ENCODE measurements at regions of chr7 and their contacts with region 1.

Region 1: DNA sequence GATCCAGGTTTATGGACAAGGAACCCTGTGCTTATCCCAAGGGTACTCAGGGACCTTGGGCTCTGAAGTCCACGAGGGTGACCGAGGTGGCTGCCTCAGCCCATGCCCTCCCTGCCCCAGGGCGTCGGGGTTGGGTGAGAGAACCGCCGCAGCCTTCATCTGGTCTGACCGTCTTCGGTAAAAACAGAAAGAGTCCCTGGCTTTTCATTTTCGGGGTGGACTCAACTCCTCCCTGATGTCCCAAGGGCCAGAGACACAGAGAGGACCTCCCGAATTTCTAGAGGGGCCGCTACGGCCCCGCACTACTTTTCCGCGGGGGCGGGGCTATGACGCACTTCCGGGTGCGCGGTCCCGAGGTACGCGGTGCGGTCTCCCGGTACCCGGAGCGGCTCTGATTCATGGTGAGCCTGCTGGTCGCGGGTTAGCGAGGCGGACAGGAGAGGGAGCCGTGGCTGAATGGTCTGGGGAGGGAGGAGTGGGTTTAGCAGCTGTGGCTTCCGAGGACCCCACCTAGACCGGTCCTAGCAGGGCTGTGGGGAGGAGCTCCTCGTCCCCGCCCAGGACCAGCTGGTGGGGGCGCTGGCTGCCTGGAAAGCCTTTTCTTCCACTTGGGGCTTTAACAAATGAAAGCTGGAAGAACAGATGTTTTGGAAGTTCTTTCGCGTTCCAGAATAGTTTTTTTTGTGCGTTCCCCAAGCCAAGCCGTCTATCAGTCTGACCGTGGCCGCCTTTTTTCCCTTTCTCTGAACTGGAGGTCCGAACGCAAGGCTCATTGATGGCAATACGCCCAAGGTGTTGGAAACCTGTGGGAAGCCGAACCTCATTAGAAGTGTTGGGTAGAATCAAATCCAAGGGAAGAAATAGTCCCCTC is at the start of gene ZSCAN21:
- DNase-seq: peak; percentile 85 to 93 (median 89)
- ATAC-seq: peak; percentile 94 to 99 (median 98)
- H3K4me3 ChIP-seq: peak within 1 kb of the TSS; percentile 53 to 92 (median 80)
- H3K27ac ChIP-seq: peak within 1 kb of the TSS; percentile 66 to 98 (median 94)
- H3K4me1 ChIP-seq: peaks cover 0 to 19% (median 7%) of the 10 kb centered on the region in 12 donors
- H3K27me3 ChIP-seq: no peaks in the 10 kb centered on the region
- CTCF ChIP-seq: peak in 5 of 12 donors; percentile 14 to 45 (median 16)
- POLR2A ChIP-seq: peak; percentile 21 to 79
- total RNA-seq, gene ZSCAN21: 6.2 to 12.1 (median 7.2) TPM

Region 2: DNA sequence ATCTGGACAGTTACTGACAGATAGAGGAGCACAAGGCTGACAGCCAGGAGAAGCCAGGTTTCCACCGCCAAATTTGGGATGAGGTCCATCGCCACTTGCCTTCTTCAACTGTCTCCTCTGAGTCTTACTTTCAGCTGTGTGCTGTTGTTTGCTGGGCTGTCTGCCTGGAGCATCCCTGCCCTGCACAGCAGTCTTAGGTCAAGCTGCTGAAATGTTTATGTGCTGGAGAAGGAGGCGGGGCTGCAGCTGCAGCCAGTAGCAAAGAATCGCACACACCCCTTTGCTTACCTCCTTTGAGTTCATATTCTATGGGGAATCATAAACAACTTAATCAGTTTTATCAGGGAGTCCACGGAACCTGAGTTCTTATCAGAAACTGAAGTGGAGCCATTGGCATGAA is 349.7 kb before region 1 on chr7:
- intact Hi-C with region 1: no loop called
- DNase-seq: no peak
- ATAC-seq: no peak
- H3K4me3 ChIP-seq: no peak overlapping the region
- H3K27ac ChIP-seq: no peak overlapping the region
- H3K4me1 ChIP-seq: no peaks in the 10 kb centered on the region
- H3K27me3 ChIP-seq: no peaks in the 10 kb centered on the region
- CTCF ChIP-seq: no peak
- POLR2A ChIP-seq: no peak

Region 3: GRCh38 chr7:99975782-99976521 is 73.7 kb before region 1 on chr7 and contains the start of gene AZGP1:
- intact Hi-C with region 1: loop called in 1 of 10 experiments (anchors 5 kb)
- DNase-seq: peak in 4 of 5 donors; percentile 48 to 77 (median 60)
- ATAC-seq: peak; percentile 87 to 93 (median 92)
- H3K4me3 ChIP-seq: peak within 1 kb of the TSS in 10 of 12 donors; percentile 12 to 49 (median 24)
- H3K27ac ChIP-seq: peak within 1 kb of the TSS in 9 of 12 donors; percentile 29 to 79 (median 60)
- H3K4me1 ChIP-seq: peaks cover 0 to 6% (median 0%) of the 10 kb centered on the region in 12 donors
- H3K27me3 ChIP-seq: peaks cover 0 to 4% (median 0%) of the 10 kb centered on the region in 9 donors
- CTCF ChIP-seq: no peak
- POLR2A ChIP-seq: peak in 1 of 2 donors; percentile 38
- total RNA-seq, gene AZGP1: 31.8 to 214 (median 95.4) TPM

Region 4: GRCh38 chr7:99997545-99998137 is 52.0 kb before region 1 on chr7:
- intact Hi-C with region 1: loop called in 9 of 10 experiments (anchors 2 to 10 kb)
- DNase-seq: peak; percentile 42 to 86 (median 65)
- ATAC-seq: peak; percentile 53 to 79 (median 74)
- H3K4me3 ChIP-seq: peak overlapping the region; percentile 35 to 75 (median 60)
- H3K27ac ChIP-seq: peak overlapping the region; percentile 59 to 90 (median 81)
- H3K4me1 ChIP-seq: peaks cover 0 to 21% (median 11%) of the 10 kb centered on the region in 12 donors
- H3K27me3 ChIP-seq: no peaks in the 10 kb centered on the region
- CTCF ChIP-seq: peak in 11 of 12 donors; percentile 16 to 58 (median 31)
- POLR2A ChIP-seq: peak in 1 of 2 donors; percentile 37

Region 5: DNA sequence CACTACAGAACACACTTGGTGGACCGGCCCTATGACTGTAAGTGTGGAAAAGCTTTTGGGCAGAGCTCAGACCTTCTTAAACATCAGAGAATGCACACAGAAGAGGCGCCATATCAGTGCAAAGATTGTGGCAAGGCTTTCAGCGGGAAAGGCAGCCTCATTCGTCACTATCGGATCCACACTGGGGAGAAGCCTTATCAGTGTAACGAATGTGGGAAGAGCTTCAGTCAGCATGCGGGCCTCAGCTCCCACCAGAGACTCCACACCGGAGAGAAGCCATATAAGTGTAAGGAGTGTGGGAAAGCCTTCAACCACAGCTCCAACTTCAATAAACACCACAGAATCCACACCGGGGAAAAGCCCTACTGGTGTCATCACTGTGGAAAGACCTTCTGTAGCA is 14.5 kb after region 1 on chr7:
- intact Hi-C with region 1: loop called in 1 of 10 experiments (anchors 1 kb)
- DNase-seq: no peak
- ATAC-seq: no peak
- H3K4me3 ChIP-seq: no peak overlapping the region
- H3K27ac ChIP-seq: peak overlapping the region in 1 of 12 donors; percentile 75
- H3K4me1 ChIP-seq: peaks cover 0 to 17% (median 9%) of the 10 kb centered on the region in 12 donors
- H3K27me3 ChIP-seq: no peaks in the 10 kb centered on the region
- CTCF ChIP-seq: no peak
- POLR2A ChIP-seq: no peak

Region 6: DNA sequence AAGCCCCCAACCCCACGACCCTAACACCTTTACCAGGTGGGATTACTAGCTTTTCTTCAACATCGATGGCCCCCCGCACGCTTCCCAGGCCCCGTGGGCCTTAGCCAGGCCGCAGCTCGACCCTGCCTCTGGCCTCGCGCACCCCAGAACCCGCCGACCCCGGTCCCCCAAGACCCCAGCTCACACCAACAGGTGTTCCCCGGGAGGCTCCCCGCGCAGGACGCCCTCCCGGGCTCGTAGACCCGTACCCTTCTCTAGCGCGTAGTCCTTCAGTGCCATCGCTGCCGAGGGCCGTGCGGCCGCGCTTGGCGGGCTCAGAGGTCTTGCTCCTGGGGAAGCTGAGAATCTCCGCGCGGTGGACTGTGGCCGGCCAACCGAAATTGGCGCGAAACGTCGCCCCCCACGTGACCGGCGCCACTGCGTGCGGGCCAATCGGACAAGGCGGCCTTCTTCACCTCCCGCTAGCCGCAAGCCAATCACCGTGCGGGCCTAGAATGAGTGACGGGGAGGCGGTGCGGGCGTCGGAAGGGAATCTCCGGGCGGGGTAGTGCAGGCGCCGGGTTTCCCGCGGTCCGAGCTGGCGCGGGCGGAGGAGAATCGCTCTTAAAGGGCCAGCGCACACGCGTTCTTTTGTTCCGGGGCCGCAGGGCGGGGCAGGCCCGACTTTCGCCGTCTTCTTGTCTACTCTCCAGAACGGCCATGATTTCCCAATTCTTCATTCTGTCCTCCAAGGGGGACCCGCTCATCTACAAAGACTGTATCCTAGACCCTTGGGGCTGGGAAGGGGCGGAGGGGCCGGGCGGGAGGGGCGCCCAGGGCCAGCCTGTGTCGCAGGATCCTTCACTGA is 51.6 kb after region 1 on chr7 and contains the starts of genes AP4M1 and MCM7:
- intact Hi-C with region 1: loop called in 2 of 10 experiments (anchors 2 kb)
- DNase-seq: peak; percentile 99
- ATAC-seq: peak; percentile 94 to 96 (median 96)
- H3K4me3 ChIP-seq: peak within 1 kb of the TSS; percentile 59 to 93 (median 76)
- H3K27ac ChIP-seq: peak within 1 kb of the TSS; percentile 81 to 97 (median 93)
- H3K4me1 ChIP-seq: peaks cover 0 to 28% (median 21%) of the 10 kb centered on the region in 12 donors
- H3K27me3 ChIP-seq: no peaks in the 10 kb centered on the region
- CTCF ChIP-seq: no peak
- POLR2A ChIP-seq: peak in 1 of 2 donors; percentile 40
- total RNA-seq, gene AP4M1: 8.9 to 19.3 (median 12.3) TPM
- total RNA-seq, gene MCM7: 12.8 to 34.4 (median 17.2) TPM

Region 7: GRCh38 chr7:100137851-100138760 is 88.4 kb after region 1 on chr7:
- intact Hi-C with region 1: no loop called
- DNase-seq: no peak
- ATAC-seq: no peak
- H3K4me3 ChIP-seq: no peak overlapping the region
- H3K27ac ChIP-seq: no peak overlapping the region
- H3K4me1 ChIP-seq: no peaks in the 10 kb centered on the region
- H3K27me3 ChIP-seq: peaks cover 0 to 15% (median 0%) of the 10 kb centered on the region in 9 donors
- CTCF ChIP-seq: no peak
- POLR2A ChIP-seq: no peak

Measured in heart left ventricle (tissue), 16 donors.